Lower leg skin (tissue), 4 donors: ENCODE measurements at regions of chr10 and their contacts with region 1.

Region 1: GRCh38 chr10:69757553-69758309 is 44.0 kb upstream of the COL13A1 start:
- DNase-seq: no peak
- H3K4me3 ChIP-seq: no peak overlapping the region
- CTCF ChIP-seq: no peak
- POLR2A ChIP-seq: no peak

Region 2: GRCh38 chr10:69290993-69291392 is 466.7 kb before region 1 on chr10:
- intact Hi-C with region 1: no loop called
- DNase-seq: no peak
- H3K4me3 ChIP-seq: no peak overlapping the region
- CTCF ChIP-seq: no peak
- POLR2A ChIP-seq: no peak

Region 3: DNA sequence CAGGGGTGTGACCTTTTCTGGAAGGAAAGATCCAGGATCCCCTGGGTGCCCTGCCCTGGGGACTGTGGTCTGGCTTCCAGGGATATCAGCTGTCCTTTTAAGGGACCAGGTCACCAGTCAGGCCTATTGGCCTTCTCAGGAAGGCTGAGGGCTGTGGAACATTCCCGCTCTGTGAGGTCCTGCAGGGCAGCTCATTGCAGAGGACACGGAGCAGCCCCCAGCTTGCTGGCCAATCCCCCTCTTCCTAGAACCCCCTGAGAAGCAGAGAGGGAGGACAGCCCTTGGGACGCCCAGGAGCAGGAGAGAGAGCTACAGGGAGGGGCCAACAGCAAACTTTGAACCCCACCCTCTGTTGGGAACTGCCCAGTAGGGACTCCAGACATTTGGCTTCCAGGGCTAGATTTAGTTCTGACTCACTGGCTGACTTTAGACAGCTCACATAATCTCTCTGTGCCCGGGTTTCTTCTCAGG is 23.9 kb before region 1 on chr10:
- intact Hi-C with region 1: loop called (anchors 2 kb)
- DNase-seq: no peak
- H3K4me3 ChIP-seq: no peak overlapping the region
- CTCF ChIP-seq: no peak
- POLR2A ChIP-seq: no peak

Region 4: DNA sequence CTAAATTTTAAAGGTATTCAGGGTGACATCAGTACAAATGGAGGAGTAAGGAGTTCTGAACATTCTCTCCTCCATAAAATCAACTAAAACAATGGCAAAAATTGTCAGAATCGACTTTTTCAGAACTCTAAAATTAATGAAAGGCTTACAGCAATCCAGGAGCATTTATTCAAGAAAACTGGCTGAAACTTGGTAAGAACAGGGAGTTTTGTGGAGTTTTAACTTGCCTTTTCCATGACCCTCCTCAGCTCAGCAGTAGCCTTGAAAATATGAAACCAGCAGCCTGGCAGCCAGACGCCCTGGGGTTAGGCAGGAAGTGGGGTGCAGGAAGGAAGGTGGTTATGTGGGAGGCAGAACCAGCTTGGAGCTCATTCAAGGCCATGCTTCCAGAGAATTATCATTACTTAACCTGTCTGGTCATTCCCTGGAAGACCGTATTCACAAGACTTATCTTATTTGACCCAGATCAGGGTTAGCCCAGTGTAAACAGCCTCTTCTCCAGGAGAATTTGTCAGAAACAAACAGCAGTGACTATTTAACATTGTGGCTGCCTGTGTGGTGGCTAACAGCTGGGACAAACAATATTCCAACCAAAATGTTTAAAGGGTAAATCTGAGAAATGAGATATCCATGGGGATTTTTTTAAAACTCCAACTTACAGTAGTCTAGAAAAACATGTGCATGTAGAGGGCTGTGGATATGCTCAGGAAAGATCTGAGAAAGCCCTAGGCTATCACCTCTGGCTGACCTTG is 219.2 kb after region 1 on chr10:
- intact Hi-C with region 1: no loop called
- DNase-seq: no peak
- H3K4me3 ChIP-seq: no peak overlapping the region
- CTCF ChIP-seq: no peak
- POLR2A ChIP-seq: no peak